WTC11 (cell line): ENCODE measurements at regions of chr11 and their contacts with region 1.

Region 1: GRCh38 chr11:6269994-6270393 is 10.4 kb downstream of the CCKBR start:
- DNase-seq: peak; percentile 59
- ATAC-seq: peak; percentile 38
- H3K4me3 Mint-ChIP-seq: no peak overlapping the region
- H3K27ac Mint-ChIP-seq: no peak overlapping the region
- H3K4me1 Mint-ChIP-seq: peaks cover 7% of the 10 kb centered on the region; the same call in 1 of the 2 replicates
- H3K27me3 Mint-ChIP-seq: peaks cover 30% of the 10 kb centered on the region
- CTCF ChIP-seq: peak; percentile 60; the same call in 1 of the 2 replicates

Region 2: DNA sequence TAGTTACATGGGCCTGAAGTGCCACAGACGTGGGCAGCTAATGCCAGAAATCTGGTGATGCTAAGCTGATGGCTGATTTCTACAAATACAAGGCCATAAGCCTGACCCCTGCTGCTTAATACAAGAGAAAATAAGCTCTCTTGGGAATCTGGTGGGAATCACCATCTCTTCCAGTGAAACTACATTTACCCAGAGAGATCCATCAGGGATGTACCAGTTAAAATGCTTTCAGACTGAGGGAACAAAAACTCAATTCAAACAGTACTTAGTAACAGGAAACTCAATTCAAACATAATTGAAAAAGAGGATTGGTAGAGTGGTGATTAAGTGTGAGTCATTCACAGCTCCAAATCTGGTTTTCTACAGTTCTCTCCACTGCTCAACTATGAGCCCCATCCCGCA is 52.0 kb after region 1 on chr11:
- CTCF ChIA-PET with region 1: interaction called, 10 read pairs
- POLR2A ChIA-PET with region 1: no interaction called
- DNase-seq: no peak
- ATAC-seq: no peak
- H3K4me3 Mint-ChIP-seq: peak overlapping the region; percentile 41
- H3K27ac Mint-ChIP-seq: peak overlapping the region; percentile 96
- H3K4me1 Mint-ChIP-seq: peaks cover 71% of the 10 kb centered on the region
- H3K27me3 Mint-ChIP-seq: peaks cover 16% of the 10 kb centered on the region
- CTCF ChIP-seq: no peak